ENCODE measurements at regions of chr1 and their contacts with region 1.

Region 1: GRCh38 chr1:224113918-224114786 is at the start of gene FBXO28:
- DNase-seq: peak; percentile 99
- H3K4me3 Mint-ChIP-seq: peak within 1 kb of the TSS; percentile 75
- H3K27ac Mint-ChIP-seq: peak within 1 kb of the TSS; percentile 83
- H3K4me1 Mint-ChIP-seq: peaks cover 26% of the 10 kb centered on the region
- H3K27me3 Mint-ChIP-seq: no peaks in the 10 kb centered on the region
- total RNA-seq, gene FBXO28: 9.6 to 9.7 TPM

Region 2: DNA sequence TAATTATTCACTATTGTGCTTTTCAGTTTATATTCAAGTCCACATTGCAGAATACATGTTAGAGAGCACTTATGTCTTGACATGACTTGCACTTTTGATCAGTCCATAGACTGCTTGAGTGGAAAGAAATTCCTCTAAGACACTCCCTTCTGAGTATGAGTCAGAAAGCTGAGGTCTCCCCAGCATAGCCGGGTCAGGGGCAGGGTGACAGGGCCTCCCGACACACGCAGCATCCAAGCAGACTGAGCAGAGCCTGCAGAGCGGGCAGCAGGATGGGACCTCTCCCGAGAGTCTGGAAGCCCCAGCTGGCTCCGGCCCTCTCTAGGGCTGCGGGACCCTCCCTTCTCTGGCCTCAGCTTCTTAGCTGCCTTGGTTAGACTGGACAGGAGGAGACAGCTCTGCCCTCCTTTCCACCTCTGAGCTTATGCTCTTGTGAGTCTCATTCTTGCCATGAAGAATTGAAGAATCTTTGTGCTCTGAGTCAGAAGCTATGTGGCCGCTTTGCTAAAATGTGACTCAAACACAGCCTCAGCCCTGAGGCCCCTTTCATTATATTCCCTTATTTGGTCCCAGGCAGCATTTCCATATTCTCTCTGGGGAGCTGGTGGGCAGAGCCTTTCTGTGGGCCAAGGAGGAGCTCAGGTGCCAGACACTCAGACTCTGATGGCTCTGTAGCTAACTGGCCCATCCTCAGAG is 413.1 kb before region 1 on chr1:
- CTCF ChIA-PET with region 1: no interaction called
- intact Hi-C with region 1: loop called (anchors 1 kb)
- DNase-seq: peak; percentile 29
- H3K4me3 Mint-ChIP-seq: no peak overlapping the region
- H3K27ac Mint-ChIP-seq: no peak overlapping the region
- H3K4me1 Mint-ChIP-seq: peaks cover 29% of the 10 kb centered on the region
- H3K27me3 Mint-ChIP-seq: no peaks in the 10 kb centered on the region

Region 3: GRCh38 chr1:224329842-224330753 is 215.9 kb after region 1 on chr1 and contains the start of gene NVL:
- CTCF ChIA-PET with region 1: interaction called, 21 read pairs
- intact Hi-C with region 1: loop called (anchors 1 kb)
- DNase-seq: peak; percentile 89
- H3K4me3 Mint-ChIP-seq: peak within 1 kb of the TSS; percentile 98
- H3K27ac Mint-ChIP-seq: peak within 1 kb of the TSS; percentile 98
- H3K4me1 Mint-ChIP-seq: peaks cover 38% of the 10 kb centered on the region
- H3K27me3 Mint-ChIP-seq: no peaks in the 10 kb centered on the region
- total RNA-seq, gene NVL: 26.7 to 29.9 TPM

Region 4: GRCh38 chr1:224434691-224435317 is 320.7 kb after region 1 on chr1 and contains the start of gene WDR26:
- CTCF ChIA-PET with region 1: no interaction called
- intact Hi-C with region 1: loop called (anchors 1 kb)
- DNase-seq: peak; percentile 91
- H3K4me3 Mint-ChIP-seq: peak within 1 kb of the TSS; percentile 95
- H3K27ac Mint-ChIP-seq: peak within 1 kb of the TSS; percentile 95
- H3K4me1 Mint-ChIP-seq: peaks cover 46% of the 10 kb centered on the region
- H3K27me3 Mint-ChIP-seq: no peaks in the 10 kb centered on the region
- total RNA-seq, gene WDR26: 44.3 to 45.4 TPM

Region 5: DNA sequence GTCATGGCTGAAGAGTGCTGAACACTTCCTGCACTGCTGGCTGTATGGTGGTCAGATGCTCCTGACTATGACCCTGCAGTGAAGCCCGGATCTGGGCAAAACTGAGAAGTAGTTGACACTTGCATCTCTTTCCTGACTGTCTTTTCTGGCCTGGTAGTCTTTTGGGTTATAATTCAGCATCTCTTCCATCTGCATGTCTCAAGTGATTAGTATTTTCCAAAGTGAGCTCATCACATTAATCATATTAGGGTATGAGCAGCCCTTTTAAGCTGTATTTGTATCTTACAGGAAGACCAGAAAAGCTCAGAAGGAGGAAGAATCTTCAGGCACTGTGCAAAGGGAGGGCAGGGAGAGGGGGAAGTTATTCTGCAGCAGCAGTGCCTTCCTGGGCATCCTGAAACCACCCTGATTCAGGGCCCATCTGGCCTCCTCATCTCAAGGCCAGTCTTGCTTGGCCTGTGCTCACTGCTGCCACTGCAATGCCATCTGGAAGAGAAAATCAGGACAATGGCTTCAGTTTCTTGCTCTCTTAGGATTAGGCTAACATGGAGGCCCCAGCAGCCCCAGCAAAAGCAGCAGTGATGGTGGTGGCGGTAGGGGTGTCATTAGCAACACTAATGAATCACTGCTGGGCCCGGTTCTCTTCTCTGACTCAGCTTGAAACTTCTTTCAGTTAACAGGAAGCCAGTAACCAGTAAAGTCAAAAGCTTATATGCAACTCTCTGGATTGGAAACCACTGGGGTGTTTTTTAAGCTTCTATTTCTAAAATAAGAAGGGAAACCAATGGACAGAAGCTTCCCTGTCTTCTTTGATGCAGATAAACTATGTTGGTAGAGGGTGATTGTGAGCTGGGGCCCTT is 383.8 kb after region 1 on chr1:
- CTCF ChIA-PET with region 1: no interaction called
- intact Hi-C with region 1: loop called (anchors 1 kb)
- DNase-seq: peak; percentile 91
- H3K4me3 Mint-ChIP-seq: peak overlapping the region; percentile 54
- H3K27ac Mint-ChIP-seq: peak overlapping the region; percentile 92
- H3K4me1 Mint-ChIP-seq: peaks cover 40% of the 10 kb centered on the region
- H3K27me3 Mint-ChIP-seq: peaks cover 7% of the 10 kb centered on the region

Region 6: GRCh38 chr1:225428068-225428880 is 1314.1 kb after region 1 on chr1:
- CTCF ChIA-PET with region 1: no interaction called
- intact Hi-C with region 1: loop called (anchors 5 kb)
- DNase-seq: peak; percentile 94
- H3K4me3 Mint-ChIP-seq: peak overlapping the region; percentile 85
- H3K27ac Mint-ChIP-seq: peak overlapping the region; percentile 96
- H3K4me1 Mint-ChIP-seq: peaks cover 43% of the 10 kb centered on the region
- H3K27me3 Mint-ChIP-seq: no peaks in the 10 kb centered on the region